ENCODE measurements at regions of chr10 and their contacts with region 1.

Region 1: DNA sequence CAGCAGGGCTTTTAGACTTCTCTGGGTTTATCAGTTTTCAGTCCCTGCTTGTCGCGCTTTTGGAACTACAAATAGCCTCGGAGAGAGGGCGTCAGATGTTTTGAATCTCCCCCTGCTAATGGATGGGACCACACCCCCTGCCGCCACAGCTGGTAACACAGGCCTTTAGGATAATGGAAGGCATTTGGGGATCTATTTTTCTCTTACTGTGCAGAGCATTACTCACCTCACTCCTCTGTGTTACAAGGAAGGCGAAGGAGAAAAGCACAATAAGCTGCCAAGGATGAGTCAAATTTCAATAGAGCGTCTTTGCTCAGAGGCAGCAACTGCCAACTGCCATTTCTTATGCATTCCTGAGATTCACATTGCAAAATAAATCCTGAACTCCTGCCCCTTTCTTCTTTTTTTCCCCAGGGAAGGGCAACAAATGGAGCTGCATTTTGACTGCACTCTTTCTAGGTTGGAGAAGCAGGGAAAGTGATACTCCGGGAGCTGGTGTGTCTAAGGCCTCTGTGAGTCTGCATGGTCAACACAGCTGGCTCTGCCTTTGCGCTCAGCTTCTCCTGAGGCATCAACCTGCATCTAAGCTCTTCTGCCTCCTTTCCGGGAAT is 31.5 kb upstream of the SMNDC1 start:
- DNase-seq: no peak

Region 2: DNA sequence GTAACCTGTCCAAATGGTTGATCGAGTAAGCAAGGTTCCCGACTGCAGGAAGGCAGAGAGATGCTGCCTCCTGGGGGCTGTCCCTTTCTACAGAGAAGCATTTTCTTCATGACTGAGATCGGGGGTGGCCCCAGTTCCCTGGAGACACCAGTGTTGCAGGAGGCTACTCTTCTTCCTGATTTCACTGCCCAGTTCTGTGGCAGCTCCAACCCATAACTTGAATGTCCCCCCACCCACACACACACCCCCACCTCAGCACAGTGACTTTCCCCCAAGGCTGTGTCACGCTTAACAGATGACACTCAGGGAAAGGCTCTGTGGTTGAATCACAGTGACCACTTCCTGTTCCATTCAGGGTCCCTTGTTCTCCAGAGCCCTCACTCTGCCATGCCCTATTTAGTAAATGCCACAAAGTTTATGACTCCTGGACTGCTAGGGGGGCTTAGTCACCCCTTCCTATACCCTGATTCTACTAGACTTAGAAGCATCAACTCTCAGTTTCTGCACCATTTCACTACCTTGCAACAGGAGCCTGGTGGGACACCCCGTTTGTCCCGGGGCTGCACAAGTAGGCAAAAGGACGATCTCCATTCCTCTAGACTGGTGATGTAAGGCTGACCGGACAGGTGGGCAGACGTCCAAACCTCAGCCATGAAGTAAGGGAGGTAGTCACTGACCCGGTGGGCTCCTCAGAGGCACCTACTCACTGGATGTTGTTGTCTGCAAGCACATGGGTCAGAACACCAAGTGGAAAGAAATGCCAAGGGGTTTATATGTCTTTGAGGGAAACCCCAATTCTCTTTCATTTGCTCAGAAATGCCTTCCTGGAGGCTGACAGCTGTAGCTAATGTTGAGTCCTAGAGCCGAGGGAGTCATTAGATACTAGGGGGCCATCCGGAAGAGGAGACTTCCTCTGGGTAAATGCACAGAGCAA is 200.0 kb after region 1 on chr10:
- in situ Hi-C with region 1: loop called (anchors 25 kb)
- DNase-seq: peak; percentile 39

Region 3: DNA sequence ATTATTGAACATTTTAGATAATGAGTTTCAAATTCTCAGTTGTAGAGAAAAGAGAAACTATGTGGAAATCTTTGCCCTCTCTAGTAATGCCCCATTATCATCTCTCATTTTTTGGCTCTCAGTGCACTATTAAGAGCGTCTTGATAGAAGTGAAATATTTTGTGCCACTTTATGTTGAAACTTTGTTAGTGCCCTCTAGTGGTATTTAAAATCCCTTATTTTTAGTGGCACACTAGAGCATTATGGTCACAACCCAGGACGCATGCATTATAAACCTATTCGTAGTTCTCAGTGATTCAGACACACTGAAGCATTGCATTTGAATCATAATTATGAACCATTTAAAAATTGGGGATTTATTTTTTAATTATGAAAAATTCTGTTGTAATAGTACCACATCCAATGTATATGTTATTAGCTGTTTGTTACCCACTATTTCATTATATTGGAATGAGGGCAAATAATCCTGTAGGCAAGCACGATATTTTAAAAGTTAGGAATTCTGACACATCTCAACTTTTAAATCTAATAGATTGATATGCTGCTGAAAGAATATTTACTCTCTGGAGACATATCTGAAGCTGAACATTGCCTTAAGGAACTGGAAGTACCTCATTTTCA is 557.5 kb after region 1 on chr10:
- in situ Hi-C with region 1: no loop called
- DNase-seq: peak; percentile 67

Measured in SK-MEL-5 (cell line).